ENCODE measurements at regions of chr5 and their contacts with region 1.

Region 1: DNA sequence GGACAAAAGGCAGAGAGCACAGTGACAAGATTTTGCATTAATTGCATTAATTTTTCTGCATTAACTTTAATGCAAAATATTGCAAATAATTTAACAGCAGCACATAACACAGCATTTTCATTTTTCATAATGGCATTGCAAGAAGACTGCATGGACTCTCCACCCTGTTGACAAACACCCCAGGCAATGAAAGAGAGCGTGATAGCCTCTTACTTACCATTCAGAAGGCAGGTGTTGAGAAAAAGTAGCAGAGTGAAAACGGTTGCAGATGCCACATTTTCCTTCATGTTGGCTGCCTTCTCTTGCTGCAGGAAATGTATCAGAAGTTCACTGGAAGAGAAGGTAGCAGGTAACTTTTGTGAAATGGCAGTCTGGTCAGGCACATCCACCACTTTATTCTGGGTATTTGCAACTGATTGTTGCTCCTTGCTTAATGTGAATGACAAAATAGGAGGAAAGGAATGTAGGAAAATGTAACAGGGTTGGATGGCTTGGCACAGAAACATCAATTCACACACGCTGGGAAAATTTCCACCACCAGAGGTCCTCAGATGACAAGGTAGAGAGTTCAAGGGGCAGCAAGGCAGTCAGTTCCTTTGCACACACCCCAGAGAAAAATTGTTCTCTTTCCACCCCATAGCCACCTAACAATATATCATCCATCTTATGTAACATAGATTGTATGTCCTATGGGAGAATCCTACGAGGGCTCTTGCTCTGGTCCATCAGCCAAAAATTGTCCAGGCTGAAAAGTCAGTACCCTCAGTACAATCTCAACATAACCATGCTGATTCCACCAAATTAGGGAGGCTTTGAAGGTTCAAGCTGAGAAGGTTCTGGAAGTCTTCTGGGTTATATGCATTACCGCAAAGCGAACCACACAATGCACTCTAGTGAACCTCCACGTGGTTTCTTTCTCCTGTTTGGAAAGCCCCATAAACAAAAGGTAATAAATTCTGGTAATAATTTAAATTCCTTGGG is 41.9 kb upstream of the AGXT2 start:
- DNase-seq: peak; percentile 72
- ATAC-seq: peak; percentile 86
- H3K4me3 ChIP-seq: no peak overlapping the region
- H3K27ac ChIP-seq: no peak overlapping the region
- H3K4me1 ChIP-seq: peaks cover 4% of the 10 kb centered on the region; the same call in 1 of the 2 replicates
- H3K27me3 ChIP-seq: peaks cover 6% of the 10 kb centered on the region
- CTCF ChIP-seq: peak; percentile 90
- POLR2A ChIP-seq: no peak
- RAD21 ChIP-seq: peak; percentile 97

Region 2: GRCh38 chr5:34898258-34898895 is 191.2 kb before region 1 on chr5:
- CTCF ChIA-PET with region 1: no interaction called
- POLR2A ChIA-PET with region 1: no interaction called
- dilution Hi-C with region 1: no loop called
- in situ Hi-C with region 1: no loop called
- intact Hi-C with region 1: no loop called
- DNase-seq: peak; percentile 77
- ATAC-seq: peak; percentile 90
- H3K4me3 ChIP-seq: no peak overlapping the region
- H3K27ac ChIP-seq: no peak overlapping the region
- H3K4me1 ChIP-seq: no peaks in the 10 kb centered on the region
- H3K27me3 ChIP-seq: no peaks in the 10 kb centered on the region
- CTCF ChIP-seq: peak; percentile 84
- POLR2A ChIP-seq: 0 out of 2 replicates have a peak, but pooled peaks have one; percentile 38
- RAD21 ChIP-seq: peak; percentile 92

Region 3: DNA sequence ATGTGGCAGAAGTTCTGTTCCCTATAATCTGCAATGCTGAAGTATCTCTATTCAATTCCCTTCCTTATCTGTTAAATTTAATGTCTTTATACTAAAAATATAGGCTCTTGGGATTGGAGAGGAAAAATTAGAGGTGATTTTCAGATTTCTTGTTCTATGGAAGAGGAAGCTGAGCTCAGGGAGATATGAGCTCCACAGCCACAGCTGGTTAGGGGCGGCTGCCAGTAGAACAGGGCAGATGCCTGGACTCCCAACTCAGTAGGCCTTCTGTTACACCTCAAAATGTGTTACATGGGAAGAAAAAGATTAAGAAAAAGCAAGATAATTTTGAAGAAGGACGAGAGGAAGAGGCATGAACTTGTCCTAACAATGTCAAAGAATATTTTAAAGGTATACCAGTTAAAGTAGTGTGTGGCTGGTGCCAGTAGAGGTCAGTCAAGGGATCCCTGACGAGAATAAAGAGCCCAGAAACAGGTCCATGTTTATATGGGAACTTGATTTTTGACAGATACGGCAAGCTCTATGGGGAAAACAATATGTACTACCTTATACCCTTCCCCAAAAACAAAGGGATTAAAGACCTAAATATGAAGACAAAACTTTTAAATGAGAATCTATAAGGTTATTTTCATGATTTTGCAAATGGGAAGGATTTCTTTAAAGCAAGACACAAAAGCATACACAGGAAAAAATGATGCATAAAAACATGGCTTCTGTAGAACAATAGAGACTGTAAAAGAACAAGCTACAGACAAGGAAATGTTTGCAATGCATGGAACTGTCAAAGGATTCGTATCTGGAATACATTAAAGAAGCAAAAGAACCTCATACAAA is 131.6 kb before region 1 on chr5:
- CTCF ChIA-PET with region 1: no interaction called
- POLR2A ChIA-PET with region 1: no interaction called
- dilution Hi-C with region 1: no loop called
- in situ Hi-C with region 1: no loop called
- intact Hi-C with region 1: loop called (anchors 1 kb)
- DNase-seq: peak; percentile 36
- ATAC-seq: peak; percentile 87
- H3K4me3 ChIP-seq: no peak overlapping the region
- H3K27ac ChIP-seq: 0 out of 2 replicates have a peak overlapping the region, but pooled peaks have one; percentile 33
- H3K4me1 ChIP-seq: peaks cover 5% of the 10 kb centered on the region
- H3K27me3 ChIP-seq: no peaks in the 10 kb centered on the region
- CTCF ChIP-seq: peak; percentile 66
- POLR2A ChIP-seq: no peak
- RAD21 ChIP-seq: peak; percentile 65

Region 4: GRCh38 chr5:34970552-34970951 is 119.1 kb before region 1 on chr5:
- CTCF ChIA-PET with region 1: no interaction called
- POLR2A ChIA-PET with region 1: no interaction called
- dilution Hi-C with region 1: no loop called
- in situ Hi-C with region 1: no loop called
- intact Hi-C with region 1: no loop called
- DNase-seq: no peak
- ATAC-seq: no peak
- H3K4me3 ChIP-seq: no peak overlapping the region
- H3K27ac ChIP-seq: no peak overlapping the region
- H3K4me1 ChIP-seq: no peaks in the 10 kb centered on the region
- H3K27me3 ChIP-seq: no peaks in the 10 kb centered on the region; the same call in 1 of the 2 replicates
- CTCF ChIP-seq: no peak
- POLR2A ChIP-seq: no peak
- RAD21 ChIP-seq: no peak

Region 5: DNA sequence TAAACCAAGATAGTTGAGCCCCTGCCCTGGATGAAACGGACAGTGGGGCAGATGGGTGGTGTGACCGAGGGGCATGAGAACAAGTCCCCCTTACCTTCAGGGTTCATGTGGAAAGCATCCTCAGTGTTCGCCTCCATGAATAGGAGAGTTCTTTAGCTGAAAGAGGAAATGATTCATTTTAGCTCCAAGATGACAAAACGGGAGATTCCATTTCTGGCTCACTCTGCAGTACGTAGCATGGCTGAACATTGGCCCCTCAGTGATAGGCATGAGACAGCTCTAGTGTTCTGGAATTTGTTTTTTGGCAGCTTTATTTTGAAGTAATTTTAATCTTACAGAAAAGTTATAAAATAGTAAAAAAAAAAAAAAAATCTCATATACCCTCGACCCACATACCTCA is 28.3 kb after region 1 on chr5:
- CTCF ChIA-PET with region 1: no interaction called
- POLR2A ChIA-PET with region 1: no interaction called
- dilution Hi-C with region 1: no loop called
- in situ Hi-C with region 1: no loop called
- intact Hi-C with region 1: no loop called
- DNase-seq: peak; percentile 89
- ATAC-seq: peak; percentile 68
- H3K4me3 ChIP-seq: no peak overlapping the region
- H3K27ac ChIP-seq: peak overlapping the region; percentile 30; the same call in 1 of the 2 replicates
- H3K4me1 ChIP-seq: peaks cover 12% of the 10 kb centered on the region
- H3K27me3 ChIP-seq: no peaks in the 10 kb centered on the region
- CTCF ChIP-seq: no peak
- POLR2A ChIP-seq: no peak
- RAD21 ChIP-seq: no peak

Region 6: GRCh38 chr5:35202319-35203111 is 112.9 kb after region 1 on chr5:
- CTCF ChIA-PET with region 1: interaction called, 3 read pairs
- POLR2A ChIA-PET with region 1: no interaction called
- dilution Hi-C with region 1: no loop called
- in situ Hi-C with region 1: no loop called
- intact Hi-C with region 1: loop called (anchors 1 kb)
- DNase-seq: peak; percentile 52
- ATAC-seq: peak; percentile 84
- H3K4me3 ChIP-seq: no peak overlapping the region
- H3K27ac ChIP-seq: no peak overlapping the region
- H3K4me1 ChIP-seq: no peaks in the 10 kb centered on the region
- H3K27me3 ChIP-seq: peaks cover 24% of the 10 kb centered on the region
- CTCF ChIP-seq: peak; percentile 52
- POLR2A ChIP-seq: no peak
- RAD21 ChIP-seq: peak; percentile 47

Region 7: GRCh38 chr5:35617435-35618303 is 528.0 kb after region 1 on chr5 and contains the start of gene SPEF2:
- CTCF ChIA-PET with region 1: no interaction called
- POLR2A ChIA-PET with region 1: no interaction called
- dilution Hi-C with region 1: no loop called
- in situ Hi-C with region 1: loop called (anchors 25 kb)
- intact Hi-C with region 1: loop called (anchors 5 kb)
- DNase-seq: peak; percentile 91
- ATAC-seq: peak; percentile 100
- H3K4me3 ChIP-seq: peak within 1 kb of the TSS; percentile 78
- H3K27ac ChIP-seq: peak within 1 kb of the TSS; percentile 35
- H3K4me1 ChIP-seq: peaks cover 3% of the 10 kb centered on the region; the same call in 1 of the 2 replicates
- H3K27me3 ChIP-seq: no peaks in the 10 kb centered on the region
- CTCF ChIP-seq: peak; percentile 89
- POLR2A ChIP-seq: no peak
- RAD21 ChIP-seq: peak; percentile 72
- total RNA-seq, gene SPEF2: 2.3 and 2.5 TPM in 2 replicates

Region 8: DNA sequence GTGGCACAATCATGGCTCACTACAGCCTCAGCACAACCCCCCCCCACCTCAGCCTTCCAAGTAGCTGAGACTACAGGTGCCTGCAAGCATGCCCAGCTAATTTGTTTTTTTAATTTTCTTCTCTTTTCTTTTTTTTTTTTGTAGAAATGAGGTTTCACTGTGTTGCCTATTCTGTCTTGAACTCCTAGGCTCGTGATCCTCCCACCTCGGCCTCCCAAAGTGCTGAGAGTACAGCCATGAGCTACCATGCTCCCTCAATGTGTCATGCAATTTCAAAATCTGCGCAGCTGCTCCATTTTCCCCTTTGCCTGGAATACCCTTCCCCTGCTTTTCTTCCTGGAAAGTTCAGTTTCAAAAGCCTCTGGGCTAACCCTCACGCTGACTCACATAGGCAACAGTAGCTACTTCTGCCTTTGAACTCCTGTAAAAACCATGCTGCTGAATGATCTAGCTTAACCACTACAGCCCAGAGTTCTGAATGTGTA is 696.0 kb after region 1 on chr5:
- CTCF ChIA-PET with region 1: no interaction called
- POLR2A ChIA-PET with region 1: no interaction called
- dilution Hi-C with region 1: no loop called
- in situ Hi-C with region 1: no loop called
- intact Hi-C with region 1: loop called (anchors 10 kb)
- DNase-seq: no peak
- ATAC-seq: no peak
- H3K4me3 ChIP-seq: no peak overlapping the region
- H3K27ac ChIP-seq: no peak overlapping the region
- H3K4me1 ChIP-seq: peaks cover 3% of the 10 kb centered on the region; the same call in 1 of the 2 replicates
- H3K27me3 ChIP-seq: no peaks in the 10 kb centered on the region
- CTCF ChIP-seq: no peak
- POLR2A ChIP-seq: no peak
- RAD21 ChIP-seq: no peak